ENCODE measurements at regions of chr17 and their contacts with region 1.

Region 1: DNA sequence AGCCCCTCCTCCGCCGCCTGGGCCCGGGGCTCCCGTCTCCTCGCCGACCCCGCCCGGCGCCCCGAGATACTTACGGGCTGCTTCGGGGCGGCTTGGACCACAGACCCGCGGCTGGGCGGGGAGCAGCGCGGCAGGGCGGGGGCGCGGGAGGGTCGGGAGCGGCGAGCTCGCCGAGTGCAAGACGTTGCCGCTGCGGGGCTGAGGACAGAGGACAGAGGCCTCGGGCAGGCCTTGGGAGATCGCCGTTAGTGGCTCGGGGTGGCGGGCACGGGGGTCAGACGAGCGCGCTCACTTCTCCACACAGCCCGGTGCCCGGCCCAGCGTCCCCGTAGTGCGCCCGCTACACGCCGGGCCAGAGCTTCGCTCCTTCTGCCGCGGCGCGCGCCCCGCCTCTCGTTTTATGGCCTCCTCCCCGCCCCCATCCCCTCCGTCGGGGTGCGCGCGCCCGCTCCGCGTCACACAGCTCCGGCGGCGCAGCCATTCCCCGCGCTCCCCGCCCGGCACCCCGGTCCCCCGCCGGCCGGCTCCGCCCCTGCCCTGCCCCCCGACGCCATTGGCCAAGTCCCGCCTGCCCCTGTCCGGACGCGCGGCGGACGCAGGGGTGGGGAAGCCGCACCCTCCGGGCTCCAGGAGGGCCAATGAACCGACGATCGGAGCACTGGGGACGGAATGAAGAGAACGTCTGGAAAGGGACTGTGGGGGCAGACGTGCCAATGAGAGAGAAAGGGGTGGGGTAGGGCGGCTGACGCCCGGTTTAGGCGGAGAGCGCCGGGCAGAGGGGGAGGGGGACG is at the start of gene TOB1:
- DNase-seq: peak; percentile 97
- ATAC-seq: peak; percentile 91
- H3K4me3 ChIP-seq: peak within 1 kb of the TSS; percentile 97 to 98 (median 97)
- H3K27ac ChIP-seq: peak within 1 kb of the TSS; percentile 95
- H3K4me1 ChIP-seq: peaks cover 41% of the 10 kb centered on the region
- H3K27me3 ChIP-seq: no peaks in the 10 kb centered on the region; a peak in 1 of 5 replicates
- CTCF ChIP-seq: 0 out of 2 replicates have a peak, but pooled peaks have one; percentile 18
- EP300 ChIP-seq: peak; percentile 56 to 63
- POLR2A ChIP-seq: peak; percentile 99 to 100
- RAD21 ChIP-seq: peak; percentile 87
- total RNA-seq, gene TOB1: 19.4 and 21.9 TPM in 2 replicates

Region 2: GRCh38 chr17:50800196-50800700 is 65.9 kb before region 1 on chr17:
- CTCF ChIA-PET with region 1: no interaction called
- POLR2A ChIA-PET with region 1: interaction called, 11 read pairs
- in situ Hi-C with region 1: no loop called
- intact Hi-C with region 1: no loop called
- DNase-seq: no peak
- ATAC-seq: no peak
- H3K4me3 ChIP-seq: no peak overlapping the region
- H3K27ac ChIP-seq: no peak overlapping the region
- H3K4me1 ChIP-seq: peaks cover 78% of the 10 kb centered on the region
- H3K27me3 ChIP-seq: peaks cover 3 to 41% of the 10 kb centered on the region in 2 experiments; a peak in 4 of 5 replicates
- CTCF ChIP-seq: no peak
- EP300 ChIP-seq: no peak
- POLR2A ChIP-seq: no peak
- RAD21 ChIP-seq: no peak

Region 3: DNA sequence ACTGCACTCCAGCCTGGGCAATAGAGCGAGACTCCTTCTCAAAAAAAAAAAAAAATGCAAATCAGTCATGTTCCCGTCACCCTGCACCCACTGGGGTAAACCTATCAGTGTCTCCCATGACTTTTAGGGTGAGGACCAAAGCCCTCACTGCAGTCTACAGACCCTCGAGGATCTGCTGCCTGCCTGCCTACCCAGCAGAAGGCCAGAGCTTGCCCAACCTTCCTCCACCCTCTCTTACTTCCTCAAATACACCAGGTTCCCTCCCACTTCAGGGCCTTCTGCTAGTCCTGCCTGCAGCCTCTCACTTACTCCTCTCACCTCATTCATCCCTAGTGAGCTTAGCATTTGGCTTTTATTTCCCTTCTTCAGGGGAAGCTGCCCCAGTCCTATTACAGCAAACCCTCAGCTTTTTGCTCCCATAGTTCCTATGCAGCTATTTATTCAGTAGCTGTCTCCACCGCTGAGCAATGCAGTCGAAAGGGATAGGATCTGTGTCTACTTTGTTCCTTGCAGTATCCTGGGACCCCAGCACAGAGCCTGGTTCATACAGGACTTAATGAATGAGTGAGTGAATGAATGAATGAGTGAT is 17.8 kb after region 1 on chr17:
- CTCF ChIA-PET with region 1: no interaction called
- POLR2A ChIA-PET with region 1: interaction called, 343 read pairs
- in situ Hi-C with region 1: no loop called
- intact Hi-C with region 1: loop called (anchors 2 kb)
- DNase-seq: no peak
- ATAC-seq: peak; percentile 47
- H3K4me3 ChIP-seq: peak overlapping the region; percentile 2 to 54 (median 41); a peak in 4 of 6 replicates
- H3K27ac ChIP-seq: peak overlapping the region; percentile 67
- H3K4me1 ChIP-seq: peaks cover 62% of the 10 kb centered on the region
- H3K27me3 ChIP-seq: no peaks in the 10 kb centered on the region
- CTCF ChIP-seq: no peak
- EP300 ChIP-seq: no peak; a peak in 1 of 4 replicates
- POLR2A ChIP-seq: no peak
- RAD21 ChIP-seq: no peak

Region 4: GRCh38 chr17:50919321-50920085 is 53.3 kb after region 1 on chr17:
- CTCF ChIA-PET with region 1: no interaction called
- POLR2A ChIA-PET with region 1: interaction called, 177 read pairs
- in situ Hi-C with region 1: no loop called
- intact Hi-C with region 1: no loop called
- DNase-seq: peak; percentile 86
- ATAC-seq: peak; percentile 74
- H3K4me3 ChIP-seq: peak overlapping the region in 2 of 3 experiments; percentile 31 to 65; a peak in 3 of 6 replicates
- H3K27ac ChIP-seq: peak overlapping the region; percentile 5
- H3K4me1 ChIP-seq: peaks cover 100% of the 10 kb centered on the region
- H3K27me3 ChIP-seq: 0 out of 5 replicates have a peak, but pooled peaks cover 0 to 2% of the 10 kb centered on the region in 2 experiments
- CTCF ChIP-seq: peak; percentile 19
- EP300 ChIP-seq: no peak
- POLR2A ChIP-seq: no peak
- RAD21 ChIP-seq: 0 out of 2 replicates have a peak, but pooled peaks have one; percentile 9

Region 5: DNA sequence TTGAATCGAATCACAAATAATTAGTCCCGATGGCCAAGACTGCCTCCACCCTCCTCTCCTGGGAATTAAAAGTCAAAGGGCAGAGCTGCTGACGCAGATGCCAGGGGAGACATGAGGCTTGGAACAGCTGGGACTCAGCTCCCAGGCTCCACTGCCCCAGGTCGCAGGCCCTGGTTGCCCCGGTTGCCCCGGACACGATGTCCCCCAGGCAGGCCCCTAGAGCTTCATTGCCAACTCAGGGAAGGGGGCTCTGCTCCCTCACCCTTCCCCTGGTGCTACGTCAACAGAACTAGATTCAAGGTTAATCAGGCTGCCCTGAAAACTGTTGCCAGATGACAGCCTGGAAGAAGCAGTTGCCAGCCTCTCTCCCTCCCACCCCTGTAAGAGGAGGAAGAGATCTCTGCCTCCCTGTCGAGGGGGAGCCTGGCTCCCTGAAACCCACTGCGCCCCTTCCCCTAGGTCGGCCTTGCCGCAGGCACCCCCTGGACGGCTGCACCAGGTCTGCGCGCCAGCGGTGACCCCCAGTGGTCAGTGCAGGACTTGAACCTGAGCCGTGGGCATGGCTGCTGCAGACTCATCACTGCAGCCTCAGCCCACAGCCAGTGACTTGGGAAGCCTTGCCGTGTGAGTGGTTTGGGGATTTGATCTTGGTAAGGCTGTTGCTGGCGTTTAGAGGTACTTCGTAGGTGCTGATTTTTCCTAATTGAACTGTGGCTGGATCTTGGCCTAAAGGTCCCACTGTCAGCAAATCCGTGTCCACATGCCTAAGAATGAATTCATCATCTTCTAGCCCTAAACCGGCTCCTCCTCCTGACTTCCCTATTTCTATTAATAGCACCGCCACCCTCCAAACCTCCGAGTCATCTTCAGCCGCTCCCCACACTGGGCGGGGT is 84.1 kb after region 1 on chr17:
- CTCF ChIA-PET with region 1: interaction called, 19 read pairs
- POLR2A ChIA-PET with region 1: interaction called, 510 read pairs
- in situ Hi-C with region 1: loop called (anchors 5 kb)
- intact Hi-C with region 1: loop called (anchors 1 kb)
- DNase-seq: peak; percentile 65
- ATAC-seq: peak; percentile 81
- H3K4me3 ChIP-seq: peak overlapping the region; percentile 10 to 69 (median 27); a peak in 5 of 6 replicates
- H3K27ac ChIP-seq: peak overlapping the region; percentile 34
- H3K4me1 ChIP-seq: peaks cover 85% of the 10 kb centered on the region
- H3K27me3 ChIP-seq: no peaks in the 10 kb centered on the region
- CTCF ChIP-seq: peak; percentile 100
- EP300 ChIP-seq: no peak
- POLR2A ChIP-seq: no peak
- RAD21 ChIP-seq: peak; percentile 100

Measured in HepG2 (cell line).